ENCODE measurements at regions of chr7 and their contacts with region 1.

Region 1: GRCh38 chr7:37504801-37505200 is 56.1 kb upstream of the ELMO1 start:
- DNase-seq: no peak
- ATAC-seq: no peak

Region 2: DNA sequence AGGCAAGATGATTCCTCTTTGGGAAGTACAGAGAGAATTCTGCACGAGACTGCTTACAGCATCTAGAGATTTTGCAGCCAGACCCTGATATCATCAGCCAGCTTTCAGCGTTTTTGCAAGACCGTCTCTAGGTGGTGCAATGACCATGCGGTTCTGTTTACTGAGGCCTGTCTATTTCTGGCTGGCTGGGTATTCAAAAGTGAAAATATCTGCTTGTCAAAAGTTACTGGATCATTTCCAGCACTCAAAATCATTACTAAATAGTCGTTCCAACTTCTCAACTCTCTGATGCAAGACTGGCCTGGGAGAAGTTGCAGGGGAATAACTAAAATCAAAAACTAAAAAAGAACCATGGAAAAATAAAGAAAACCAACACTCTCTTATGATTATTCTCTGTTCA is 296.3 kb before region 1 on chr7:
- intact Hi-C with region 1: loop called (anchors 5 kb)
- DNase-seq: peak; percentile 61
- ATAC-seq: peak; percentile 93